Adrenal gland (tissue), 19 donors: ENCODE measurements at regions of chr6 and their contacts with region 1.

Region 1: DNA sequence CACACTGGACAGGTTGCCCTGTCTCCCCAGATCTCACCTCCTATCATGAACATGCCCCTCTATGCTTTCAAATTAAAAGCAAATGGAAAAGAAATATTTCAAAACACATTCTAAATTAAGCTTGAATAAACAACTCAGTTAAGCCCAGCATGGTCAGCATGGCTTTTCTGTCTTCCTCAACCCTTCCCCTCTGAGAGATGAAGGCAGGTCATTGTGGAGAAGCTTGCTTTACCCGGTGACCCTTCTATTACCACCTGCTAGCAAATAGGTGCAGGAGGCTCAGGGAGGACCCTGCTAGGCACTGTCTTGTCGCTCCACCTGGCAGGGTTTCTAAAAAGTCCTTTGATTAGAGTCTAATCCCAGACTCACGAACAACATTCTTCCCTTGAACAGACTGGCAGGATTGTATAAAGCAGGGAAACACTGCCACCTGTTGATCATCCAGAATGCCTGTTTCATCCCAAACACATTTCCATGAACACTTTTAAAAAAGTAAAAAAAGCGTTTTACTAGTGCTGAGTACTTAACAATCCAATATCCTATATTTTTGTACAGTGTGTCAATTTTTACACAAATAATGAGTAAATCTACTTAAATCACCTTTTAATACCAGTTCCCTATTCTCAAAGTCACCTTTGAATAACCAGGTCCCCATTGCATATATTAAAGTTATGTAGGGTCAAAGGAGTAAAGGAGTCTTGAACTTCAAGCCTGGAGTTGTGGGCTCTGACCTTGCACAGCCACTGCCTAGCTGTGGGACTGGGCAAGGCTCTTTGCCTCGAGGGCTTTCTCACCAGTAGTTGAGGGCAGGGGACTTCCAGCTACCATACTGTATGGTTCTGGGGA is 75.5 kb downstream of the GPR6 start:
- DNase-seq: peak in 5 of 7 donors; percentile 30 to 52 (median 40)
- H3K4me3 ChIP-seq: no peak overlapping the region
- H3K27ac ChIP-seq: no peak overlapping the region
- H3K4me1 ChIP-seq: no peaks in the 10 kb centered on the region
- H3K27me3 ChIP-seq: no peaks in the 10 kb centered on the region
- CTCF ChIP-seq: peak; percentile 64 to 79 (median 74)
- POLR2A ChIP-seq: no peak

Region 2: DNA sequence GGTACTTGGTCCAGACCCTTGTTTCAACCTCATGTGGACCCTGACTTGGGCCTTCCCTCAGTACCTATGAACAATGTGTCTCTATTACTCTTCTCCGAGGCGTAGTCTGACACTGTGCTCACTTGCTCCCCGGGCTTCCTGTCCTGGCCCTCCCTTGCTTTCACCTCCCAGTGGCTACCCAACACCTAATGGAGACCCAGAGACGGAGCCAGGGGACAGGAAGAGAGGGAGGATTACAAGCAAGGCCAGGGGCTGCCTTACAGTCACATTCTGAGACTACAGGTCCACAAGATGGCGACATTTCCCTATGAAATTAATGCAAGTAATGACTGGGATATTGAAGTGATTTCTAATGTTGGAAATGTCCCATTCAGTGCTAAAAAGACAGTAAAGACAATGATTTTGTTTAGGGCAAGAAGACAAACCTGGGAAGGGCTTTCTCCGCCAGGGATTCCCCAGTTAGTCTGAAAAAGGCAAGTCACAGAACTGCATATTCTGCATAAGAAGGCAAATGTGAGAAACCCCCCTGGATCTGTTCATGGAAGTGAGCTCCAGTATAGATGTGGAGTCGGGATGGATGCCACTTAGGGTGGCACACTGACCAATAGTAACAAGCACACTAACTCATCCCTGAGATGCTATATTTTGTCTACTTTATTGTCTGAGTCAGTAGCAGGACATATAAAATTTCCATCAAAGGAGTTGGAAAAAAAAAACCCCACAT is 526.6 kb before region 1 on chr6:
- intact Hi-C with region 1: loop called (anchors 5 to 10 kb)
- DNase-seq: peak; percentile 28 to 64 (median 55)
- H3K4me3 ChIP-seq: no peak overlapping the region
- H3K27ac ChIP-seq: no peak overlapping the region
- H3K4me1 ChIP-seq: no peaks in the 10 kb centered on the region
- H3K27me3 ChIP-seq: no peaks in the 10 kb centered on the region
- CTCF ChIP-seq: peak; percentile 30 to 68 (median 55)
- POLR2A ChIP-seq: no peak

Region 3: GRCh38 chr6:109861946-109862345 is 191.7 kb before region 1 on chr6:
- intact Hi-C with region 1: no loop called
- DNase-seq: no peak
- H3K4me3 ChIP-seq: no peak overlapping the region
- H3K27ac ChIP-seq: no peak overlapping the region
- H3K4me1 ChIP-seq: no peaks in the 10 kb centered on the region
- H3K27me3 ChIP-seq: no peaks in the 10 kb centered on the region
- CTCF ChIP-seq: no peak
- POLR2A ChIP-seq: no peak

Region 4: GRCh38 chr6:110389689-110390382 is 336.2 kb after region 1 on chr6:
- intact Hi-C with region 1: loop called (anchors 5 to 10 kb)
- DNase-seq: no peak
- H3K4me3 ChIP-seq: no peak overlapping the region
- H3K27ac ChIP-seq: no peak overlapping the region
- H3K4me1 ChIP-seq: peaks cover 0 to 4% of the 10 kb centered on the region in 2 donors
- H3K27me3 ChIP-seq: no peaks in the 10 kb centered on the region
- CTCF ChIP-seq: no peak
- POLR2A ChIP-seq: no peak

Region 5: DNA sequence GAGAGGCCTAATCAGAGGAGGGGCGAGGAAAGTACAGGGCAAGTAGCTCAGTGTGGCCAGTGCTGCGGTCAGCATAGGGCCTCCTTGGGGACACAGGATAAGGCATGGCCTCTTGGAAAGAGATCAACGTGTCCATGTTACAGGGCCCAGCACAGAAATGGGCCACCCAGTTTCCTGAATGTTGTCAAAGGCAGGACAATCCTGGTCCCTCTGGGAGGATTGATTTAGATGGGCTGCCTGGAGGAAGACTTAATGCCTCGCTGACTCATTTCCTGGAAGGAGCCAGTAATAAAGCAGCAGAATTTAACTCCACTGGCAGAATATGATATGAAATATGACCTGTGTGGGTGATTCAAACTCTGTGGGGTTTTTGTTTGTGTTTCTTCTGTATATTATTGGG is 345.2 kb after region 1 on chr6:
- intact Hi-C with region 1: loop called (anchors 5 to 10 kb)
- DNase-seq: no peak
- H3K4me3 ChIP-seq: no peak overlapping the region
- H3K27ac ChIP-seq: peak overlapping the region in 1 of 5 donors; percentile 3
- H3K4me1 ChIP-seq: peaks cover 0 to 4% of the 10 kb centered on the region in 2 donors
- H3K27me3 ChIP-seq: no peaks in the 10 kb centered on the region
- CTCF ChIP-seq: no peak
- POLR2A ChIP-seq: no peak